Head of caudate nucleus (tissue), 42 donors: ENCODE measurements at regions of chr9 and their contacts with region 1.

Region 1: GRCh38 chr9:34178520-34179212 is at the start of gene UBAP1:
- DNase-seq: peak; percentile 94 to 99 (median 97)

Region 2: DNA sequence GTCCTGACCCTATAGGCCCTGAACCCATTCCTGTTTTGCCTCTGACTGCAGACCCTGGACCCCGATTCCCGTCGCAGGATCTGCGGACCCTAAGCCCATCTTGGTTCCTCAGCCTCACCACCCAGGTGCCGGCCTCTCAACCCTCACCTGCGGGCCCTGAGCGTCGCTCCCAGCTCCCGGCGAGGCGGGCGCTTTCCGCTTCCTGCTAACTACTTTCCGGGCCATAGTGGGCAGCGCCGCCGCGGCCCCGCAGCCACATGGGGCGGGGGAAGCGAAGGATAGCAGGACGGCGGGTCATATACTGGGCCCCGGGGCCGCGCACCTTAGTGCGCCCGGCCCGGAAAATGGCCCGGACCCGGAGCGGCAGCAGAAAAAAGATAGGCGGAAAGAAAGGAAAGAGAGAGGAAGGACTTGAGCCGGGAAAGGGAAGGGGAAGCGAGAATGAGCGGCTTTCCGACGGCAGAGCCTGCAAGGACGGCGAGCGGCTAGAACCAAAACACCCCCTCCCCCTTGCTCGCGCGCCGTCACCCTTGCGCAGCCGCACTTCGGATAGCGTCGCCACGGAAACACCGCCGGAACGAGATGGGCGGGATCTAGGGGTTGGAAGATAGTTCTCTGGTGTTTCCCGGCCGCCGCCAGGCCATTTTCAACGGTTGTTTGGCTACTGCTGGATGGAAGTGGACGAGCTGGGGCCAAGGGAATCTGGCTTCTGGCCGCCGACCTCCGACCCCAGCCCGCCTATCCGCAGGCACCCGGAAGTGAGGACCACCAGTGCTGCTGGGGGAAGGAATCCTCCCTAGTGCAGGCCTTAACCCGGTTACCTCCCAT is 52.2 kb before region 1 on chr9 and contains the start of gene DCAF12:
- intact Hi-C with region 1: loop called (anchors 5 kb)
- DNase-seq: peak; percentile 72 to 96 (median 90)

Region 3: GRCh38 chr9:34227445-34227844 is 48.8 kb after region 1 on chr9:
- intact Hi-C with region 1: no loop called
- DNase-seq: peak in 1 of 42 donors; percentile 35

Region 4: DNA sequence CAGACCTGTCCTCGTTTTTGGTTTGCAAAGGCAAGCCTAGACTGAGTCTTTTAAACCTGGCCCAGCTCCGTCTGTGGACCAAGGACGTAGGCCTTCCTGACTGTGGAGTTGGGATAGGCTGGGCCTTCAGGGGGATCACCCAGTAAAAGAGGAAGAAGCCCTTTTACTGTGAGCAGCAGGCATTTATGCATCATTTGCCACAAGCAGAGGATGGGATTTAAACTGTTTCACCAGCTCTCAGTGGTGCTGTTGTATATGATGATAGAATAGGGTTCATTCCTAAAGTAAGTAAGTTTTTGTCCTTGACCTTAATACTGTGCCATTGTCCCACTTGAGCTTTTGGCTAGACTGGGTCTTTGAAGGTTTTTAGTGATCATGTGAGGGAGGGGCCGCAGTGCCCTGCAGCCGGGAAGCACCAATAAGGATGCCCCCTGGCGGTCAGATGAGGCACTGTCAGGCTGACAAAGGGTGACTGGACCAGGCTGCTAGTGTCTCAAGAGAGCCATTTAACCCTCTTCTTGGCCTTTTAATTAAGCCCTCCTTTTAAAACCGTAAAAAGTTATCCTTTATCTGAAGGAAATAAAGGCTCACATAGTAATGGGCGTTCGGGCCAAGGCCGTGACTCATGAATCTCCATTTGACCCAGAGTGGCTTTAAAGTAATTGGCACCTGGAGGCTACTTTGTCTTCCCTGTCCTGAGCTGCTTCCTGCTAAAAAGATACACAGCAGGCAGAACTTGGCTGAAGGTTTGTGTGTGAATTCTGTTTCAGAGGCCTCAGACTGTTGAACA is 74.2 kb after region 1 on chr9:
- intact Hi-C with region 1: loop called (anchors 5 kb)
- DNase-seq: peak; percentile 35 to 93 (median 78)

Region 5: DNA sequence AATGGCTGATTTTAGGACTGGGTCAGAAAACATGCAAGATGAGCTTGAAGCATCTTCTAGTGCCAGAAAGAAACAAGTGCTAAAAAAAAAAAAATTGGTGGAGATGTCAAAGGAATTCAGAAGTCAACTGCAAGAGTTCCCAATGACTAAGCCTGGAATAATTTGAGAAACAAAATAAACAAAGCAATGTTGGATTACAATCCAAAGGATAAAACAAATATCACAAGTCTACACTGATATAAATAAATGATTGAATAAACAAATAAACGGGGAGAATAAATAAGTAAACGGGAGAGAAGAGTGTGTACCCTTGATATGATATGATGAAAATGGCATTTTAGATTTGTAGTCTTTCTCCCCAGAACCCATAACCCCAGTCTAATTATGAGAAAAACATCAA is 594.7 kb after region 1 on chr9:
- intact Hi-C with region 1: no loop called
- DNase-seq: no peak